ENCODE measurements at regions of chr2 and their contacts with region 1.

Region 1: GRCh38 chr2:26970244-26970920 is at the start of gene MAPRE3:
- DNase-seq: peak; percentile 100
- H3K4me3 ChIP-seq: peak within 1 kb of the TSS; percentile 65 to 78
- H3K27ac ChIP-seq: peak within 1 kb of the TSS in 1 of 2 experiments; percentile 7; a peak in 1 of 4 replicates
- H3K4me1 ChIP-seq: peaks cover 0 to 13% of the 10 kb centered on the region in 2 experiments; a peak in 2 of 4 replicates
- H3K27me3 ChIP-seq: peaks cover 7% of the 10 kb centered on the region; the same call in 1 of the 2 replicates
- CTCF ChIP-seq: no peak
- EP300 ChIP-seq: no peak
- RAD21 ChIP-seq: no peak
- polyA plus RNA-seq, gene MAPRE3: 20.2 and 24.4 TPM in 2 replicates

Region 2: GRCh38 chr2:26942543-26943295 is 27.7 kb before region 1 on chr2:
- CTCF ChIA-PET with region 1: interaction called, 242 read pairs
- POLR2A ChIA-PET with region 1: no interaction called
- DNase-seq: peak; percentile 90
- H3K4me3 ChIP-seq: no peak overlapping the region
- H3K27ac ChIP-seq: no peak overlapping the region
- H3K4me1 ChIP-seq: peaks cover 0 to 16% of the 10 kb centered on the region in 2 experiments; a peak in 1 of 4 replicates
- H3K27me3 ChIP-seq: peaks cover 38% of the 10 kb centered on the region; the same call in 1 of the 2 replicates
- CTCF ChIP-seq: peak; percentile 77
- EP300 ChIP-seq: no peak
- RAD21 ChIP-seq: peak; percentile 89

Region 3: DNA sequence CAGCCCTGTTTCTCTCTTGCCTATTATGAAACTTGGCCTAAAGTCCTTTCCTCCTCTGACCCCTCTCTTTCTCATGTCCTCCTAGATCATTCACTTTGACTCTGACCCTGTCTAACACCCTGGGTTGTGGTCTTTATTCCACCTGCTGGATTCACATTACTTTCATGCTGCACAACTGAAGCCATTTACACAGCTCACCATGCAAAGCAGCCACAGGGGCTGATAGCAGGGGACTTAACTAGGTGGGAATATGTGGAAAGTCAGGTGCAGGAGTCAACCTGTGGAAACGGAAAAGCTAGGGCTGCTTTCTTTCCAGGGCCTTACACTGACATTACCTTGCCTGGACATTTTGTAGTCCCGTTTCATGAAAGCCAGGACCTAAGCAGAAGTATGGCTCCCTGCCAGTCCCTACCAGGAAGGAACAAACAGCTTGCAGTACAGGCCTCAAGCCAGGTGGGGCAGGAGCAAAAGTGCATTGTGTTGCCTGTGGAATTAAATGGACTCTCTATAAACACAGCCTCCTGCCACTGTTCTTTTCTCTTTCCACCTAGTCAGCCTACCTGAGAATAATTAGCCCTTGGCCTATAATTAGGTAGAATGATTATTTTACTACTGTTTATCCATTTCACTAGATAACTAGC is 11.8 kb after region 1 on chr2:
- CTCF ChIA-PET with region 1: interaction called, 257 read pairs
- POLR2A ChIA-PET with region 1: no interaction called
- DNase-seq: peak; percentile 76
- H3K4me3 ChIP-seq: no peak overlapping the region
- H3K27ac ChIP-seq: peak overlapping the region in 1 of 2 experiments; percentile 56; a peak in 1 of 4 replicates
- H3K4me1 ChIP-seq: peaks cover 0 to 25% of the 10 kb centered on the region in 2 experiments; a peak in 1 of 4 replicates
- H3K27me3 ChIP-seq: no peaks in the 10 kb centered on the region
- CTCF ChIP-seq: peak; percentile 38; the same call in 1 of the 2 replicates
- EP300 ChIP-seq: peak in 1 of 2 experiments; percentile 24; a peak in 1 of 4 replicates
- RAD21 ChIP-seq: peak; percentile 26; the same call in 1 of the 2 replicates

Region 4: DNA sequence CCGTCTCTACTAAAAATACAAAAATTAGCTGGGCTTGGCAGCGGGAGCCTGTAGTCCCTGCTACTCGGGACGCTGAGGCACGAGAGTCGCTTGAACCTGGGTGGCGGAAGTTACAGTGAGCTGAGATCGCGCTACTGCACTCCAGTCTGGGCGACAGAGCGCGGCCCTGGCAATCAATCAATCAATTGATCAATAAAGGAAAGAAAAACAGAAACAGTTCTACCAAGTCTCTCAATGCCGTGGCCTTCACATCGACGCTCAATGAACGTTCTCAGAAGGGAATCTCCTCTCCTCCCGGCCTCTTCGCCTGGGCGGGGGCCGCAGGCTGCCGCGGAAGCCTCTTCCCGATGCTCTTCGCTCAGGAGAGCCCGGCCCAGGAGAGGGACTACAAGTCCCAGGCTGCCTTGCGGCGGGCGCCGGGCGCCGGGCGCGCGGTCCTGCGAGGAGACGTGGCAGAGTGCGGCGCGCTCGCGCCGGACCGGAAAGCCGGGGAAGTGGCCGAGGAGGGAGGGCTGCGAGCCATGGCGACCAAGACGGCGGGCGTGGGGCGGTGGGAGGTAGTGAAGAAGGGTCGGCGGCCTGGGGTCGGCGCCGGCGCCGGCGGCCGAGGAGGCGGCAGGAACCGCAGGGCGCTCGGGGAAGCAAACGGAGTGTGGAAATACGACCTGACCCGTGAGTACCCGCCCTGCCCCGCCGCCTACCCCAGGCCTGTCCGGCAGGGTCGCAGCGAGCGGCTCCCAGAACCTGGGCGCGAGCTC is 62.3 kb after region 1 on chr2 and contains the start of gene TMEM214:
- CTCF ChIA-PET with region 1: interaction called, 1,017 read pairs
- POLR2A ChIA-PET with region 1: no interaction called
- DNase-seq: peak; percentile 99
- H3K4me3 ChIP-seq: peak within 1 kb of the TSS; percentile 87 to 95
- H3K27ac ChIP-seq: peak within 1 kb of the TSS; percentile 54 to 75; a peak in 2 of 4 replicates
- H3K4me1 ChIP-seq: peaks cover 8 to 17% of the 10 kb centered on the region in 2 experiments; a peak in 3 of 4 replicates
- H3K27me3 ChIP-seq: no peaks in the 10 kb centered on the region
- CTCF ChIP-seq: no peak
- EP300 ChIP-seq: no peak
- RAD21 ChIP-seq: no peak
- polyA plus RNA-seq, gene TMEM214: 69.4 and 80.2 TPM in 2 replicates

Region 5: DNA sequence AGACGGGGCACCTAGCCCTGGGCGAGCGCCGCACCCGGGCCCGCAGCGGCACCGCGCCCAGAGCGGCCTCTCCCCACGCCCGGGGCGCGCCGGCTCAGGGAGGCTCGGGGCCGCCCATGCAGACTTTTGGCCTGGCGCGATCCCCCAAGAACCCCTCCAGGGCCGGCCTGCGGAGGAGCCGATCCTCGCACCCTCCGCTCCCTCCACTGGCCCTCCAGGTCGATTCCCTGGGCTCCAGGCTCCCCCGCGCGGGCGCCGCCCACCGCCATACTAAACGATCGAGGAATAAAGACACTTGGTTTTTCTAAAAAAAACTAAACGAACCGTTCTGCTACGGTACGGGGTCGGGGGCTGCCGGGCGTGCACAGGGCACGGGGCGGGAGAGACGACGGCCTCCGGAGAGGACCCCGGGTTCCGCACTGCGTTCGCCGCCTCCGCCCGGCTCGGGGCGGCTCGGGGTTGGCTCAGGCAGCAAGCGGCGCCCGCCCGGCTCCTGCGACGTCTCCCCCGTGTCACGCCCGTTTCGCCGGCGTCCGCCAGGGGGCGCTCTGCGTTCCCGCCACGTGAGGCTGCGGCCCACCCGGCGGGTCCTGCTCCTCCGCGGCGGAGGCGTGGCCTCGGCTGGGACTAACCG is 115.8 kb after region 1 on chr2:
- CTCF ChIA-PET with region 1: interaction called, 10 read pairs
- POLR2A ChIA-PET with region 1: interaction called, 3 read pairs
- DNase-seq: peak; percentile 100
- H3K4me3 ChIP-seq: peak overlapping the region; percentile 65 to 75
- H3K27ac ChIP-seq: peak overlapping the region; percentile 37 to 89; a peak in 3 of 4 replicates
- H3K4me1 ChIP-seq: peaks cover 9 to 46% of the 10 kb centered on the region in 2 experiments; a peak in 3 of 4 replicates
- H3K27me3 ChIP-seq: no peaks in the 10 kb centered on the region
- CTCF ChIP-seq: peak; percentile 69
- EP300 ChIP-seq: peak in 1 of 2 experiments; percentile 42; a peak in 1 of 4 replicates
- RAD21 ChIP-seq: peak; percentile 52

Measured in SK-N-SH (cell line).